KBM-7 (cell line): ENCODE measurements at regions of chr11 and their contacts with region 1.

Region 1: GRCh38 chr11:74449369-74449931 is 17.9 kb downstream of the KCNE3 start:
- DNase-seq: peak; percentile 89

Region 2: GRCh38 chr11:74269161-74269811 is 180.2 kb before region 1 on chr11:
- in situ Hi-C with region 1: loop called (anchors 10 kb)
- DNase-seq: peak; percentile 27

Region 3: DNA sequence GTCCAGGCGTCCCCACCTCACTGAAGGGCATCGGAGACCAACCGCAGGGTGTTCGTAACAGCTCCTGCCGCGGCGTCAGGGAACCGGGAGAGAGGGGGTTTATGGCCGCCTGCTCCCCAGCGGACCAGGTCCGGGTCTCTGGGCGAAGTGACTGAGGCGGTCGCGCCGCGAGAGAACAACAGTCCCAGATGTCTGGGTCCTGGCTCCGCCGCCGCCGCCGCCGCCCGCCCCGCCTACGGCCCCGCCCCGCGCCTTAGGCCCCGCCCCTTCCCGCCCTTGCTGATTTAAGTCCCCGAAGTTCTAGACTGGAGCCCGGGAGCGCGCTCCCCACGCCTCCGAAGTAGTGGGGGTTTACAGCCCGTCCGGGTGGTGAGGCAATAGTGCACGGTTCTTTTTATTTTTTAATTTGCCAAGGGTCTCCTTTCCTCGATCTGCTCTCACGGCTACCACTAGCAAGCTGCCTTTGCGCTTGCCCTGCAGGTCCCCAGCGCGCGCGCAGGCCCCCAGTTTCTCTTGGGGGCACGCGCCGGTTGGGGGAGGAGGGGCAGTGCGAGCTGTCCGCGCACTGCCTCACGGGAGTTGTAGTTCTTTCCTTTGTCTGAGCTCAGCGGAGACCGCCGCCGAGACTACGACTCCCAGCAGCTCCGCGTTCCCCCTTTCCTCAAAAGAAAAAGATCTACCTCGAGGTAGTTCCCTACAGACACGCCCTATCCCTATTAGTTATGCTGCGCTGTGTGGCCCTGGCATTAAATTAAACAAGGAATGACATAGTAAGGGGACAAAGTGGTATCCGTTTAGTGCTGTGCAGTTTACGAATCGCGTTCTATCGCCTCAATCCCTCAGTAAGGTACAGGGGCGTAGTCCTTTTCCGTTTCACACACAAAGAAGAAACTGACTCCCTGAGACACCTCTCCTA is 50.9 kb before region 1 on chr11 and contains the start of gene PGM2L1:
- in situ Hi-C with region 1: no loop called
- DNase-seq: peak; percentile 98

Region 4: GRCh38 chr11:74559934-74560309 is 110.5 kb after region 1 on chr11:
- in situ Hi-C with region 1: loop called (anchors 10 kb)
- DNase-seq: no peak